ENCODE measurements at regions of chr20 and their contacts with region 1.

Region 1: GRCh38 chr20:17504898-17505635 is 26.1 kb downstream of the BFSP1 start:
- DNase-seq: peak; percentile 79 to 89
- ATAC-seq: peak; percentile 84
- H3K4me3 ChIP-seq: peak overlapping the region; percentile 33 to 45
- H3K27ac ChIP-seq: no peak overlapping the region
- H3K4me1 ChIP-seq: no peaks in the 10 kb centered on the region
- H3K27me3 ChIP-seq: no peaks in the 10 kb centered on the region

Region 2: GRCh38 chr20:17611540-17612286 is 106.6 kb after region 1 on chr20:
- intact Hi-C with region 1: loop called (anchors 2 kb)
- DNase-seq: peak; percentile 58 to 78
- ATAC-seq: peak; percentile 13
- H3K4me3 ChIP-seq: no peak overlapping the region
- H3K27ac ChIP-seq: peak overlapping the region; percentile 0 to 14
- H3K4me1 ChIP-seq: no peaks in the 10 kb centered on the region
- H3K27me3 ChIP-seq: no peaks in the 10 kb centered on the region

Region 3: DNA sequence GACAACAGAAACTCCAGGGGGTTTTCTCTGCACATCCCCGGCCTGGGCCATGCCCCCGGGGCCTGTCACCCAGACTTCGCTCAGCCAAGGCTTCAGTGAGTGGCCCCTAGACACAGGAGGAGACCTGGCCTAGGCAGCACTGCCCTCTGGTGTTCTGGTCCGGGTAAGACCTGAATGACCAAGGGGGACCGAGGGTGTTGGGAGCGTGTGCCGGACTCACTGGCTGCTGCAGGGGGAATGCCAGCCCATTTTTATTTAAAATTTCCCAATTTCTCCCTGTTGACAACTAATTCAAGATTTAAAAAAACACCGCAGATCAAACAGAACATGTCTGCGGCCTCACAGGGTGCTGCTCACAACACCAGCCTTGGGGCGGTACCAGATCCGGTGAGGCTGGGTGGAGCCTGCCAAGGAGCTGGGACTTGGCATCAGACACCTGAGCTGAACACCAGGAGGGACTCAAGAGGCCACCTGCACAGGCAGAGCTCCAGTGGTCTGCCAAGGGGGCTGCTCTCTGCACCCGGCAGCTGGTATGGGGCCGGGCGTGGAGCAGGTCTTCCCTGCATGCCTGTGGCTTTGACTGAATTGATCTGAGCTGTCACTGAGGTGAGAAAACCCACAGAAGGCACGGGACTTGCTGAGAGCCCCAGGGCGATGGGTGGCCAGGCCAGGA is 112.6 kb after region 1 on chr20:
- intact Hi-C with region 1: loop called (anchors 2 kb)
- DNase-seq: peak; percentile 67 to 87
- ATAC-seq: peak; percentile 65
- H3K4me3 ChIP-seq: no peak overlapping the region
- H3K27ac ChIP-seq: no peak overlapping the region
- H3K4me1 ChIP-seq: no peaks in the 10 kb centered on the region
- H3K27me3 ChIP-seq: no peaks in the 10 kb centered on the region

Region 4: GRCh38 chr20:17796091-17796563 is 291.1 kb after region 1 on chr20:
- intact Hi-C with region 1: loop called in 1 of 2 experiments (anchors 10 kb)
- DNase-seq: peak in 1 of 2 donors; percentile 73
- ATAC-seq: peak; percentile 90
- H3K4me3 ChIP-seq: no peak overlapping the region
- H3K27ac ChIP-seq: peak overlapping the region; percentile 35 to 50
- H3K4me1 ChIP-seq: no peaks in the 10 kb centered on the region
- H3K27me3 ChIP-seq: no peaks in the 10 kb centered on the region

Region 5: DNA sequence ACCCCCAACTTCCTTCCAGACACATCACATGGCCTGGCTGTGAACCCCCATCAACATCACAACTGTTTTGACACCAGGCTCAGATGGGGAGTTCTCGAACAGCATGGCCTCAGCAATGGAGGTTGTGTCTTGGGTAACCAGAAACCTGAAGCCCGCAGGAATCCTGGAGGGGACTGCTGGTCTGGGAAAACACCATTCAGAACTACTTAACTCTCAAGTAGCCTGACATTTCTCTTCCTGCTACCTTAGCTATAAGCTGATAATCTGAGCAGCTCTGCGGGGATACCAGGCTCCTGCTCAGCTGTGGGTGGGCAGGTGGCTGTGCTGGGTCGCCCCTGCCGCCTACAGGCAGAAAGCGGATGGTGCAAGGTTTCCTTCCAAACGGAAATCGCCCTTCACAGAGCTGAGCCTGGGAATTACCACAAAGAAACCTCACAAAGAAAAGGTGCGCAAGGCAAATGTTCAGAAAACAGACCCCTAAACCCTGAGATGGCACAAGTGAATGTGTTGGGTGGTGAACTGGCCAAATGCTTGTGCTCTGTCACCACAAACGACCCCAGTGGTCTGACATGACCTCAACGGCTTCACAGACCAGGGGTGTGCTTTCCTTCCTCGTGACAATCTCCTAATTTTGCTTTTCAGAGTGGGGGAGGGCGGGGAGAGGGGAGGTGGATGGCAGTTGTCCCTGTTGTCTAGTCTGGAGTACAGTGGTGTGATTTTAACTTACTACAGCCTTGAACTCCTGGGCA is 434.0 kb after region 1 on chr20:
- intact Hi-C with region 1: loop called in 1 of 2 experiments (anchors 10 kb)
- DNase-seq: peak; percentile 74 to 86
- ATAC-seq: peak; percentile 84
- H3K4me3 ChIP-seq: no peak overlapping the region
- H3K27ac ChIP-seq: peak overlapping the region in 1 of 2 donors; percentile 41
- H3K4me1 ChIP-seq: peaks cover 0 to 2% of the 10 kb centered on the region in 2 donors
- H3K27me3 ChIP-seq: no peaks in the 10 kb centered on the region

Region 6: GRCh38 chr20:17995967-17996819 is 491.1 kb after region 1 on chr20:
- intact Hi-C with region 1: loop called (anchors 5 to 10 kb)
- DNase-seq: no peak
- ATAC-seq: peak; percentile 86
- H3K4me3 ChIP-seq: peak overlapping the region in 1 of 2 donors; percentile 13
- H3K27ac ChIP-seq: no peak overlapping the region
- H3K4me1 ChIP-seq: no peaks in the 10 kb centered on the region
- H3K27me3 ChIP-seq: no peaks in the 10 kb centered on the region